Caco-2 (cell line): ENCODE measurements at regions of chr5 and their contacts with region 1.

Region 1: DNA sequence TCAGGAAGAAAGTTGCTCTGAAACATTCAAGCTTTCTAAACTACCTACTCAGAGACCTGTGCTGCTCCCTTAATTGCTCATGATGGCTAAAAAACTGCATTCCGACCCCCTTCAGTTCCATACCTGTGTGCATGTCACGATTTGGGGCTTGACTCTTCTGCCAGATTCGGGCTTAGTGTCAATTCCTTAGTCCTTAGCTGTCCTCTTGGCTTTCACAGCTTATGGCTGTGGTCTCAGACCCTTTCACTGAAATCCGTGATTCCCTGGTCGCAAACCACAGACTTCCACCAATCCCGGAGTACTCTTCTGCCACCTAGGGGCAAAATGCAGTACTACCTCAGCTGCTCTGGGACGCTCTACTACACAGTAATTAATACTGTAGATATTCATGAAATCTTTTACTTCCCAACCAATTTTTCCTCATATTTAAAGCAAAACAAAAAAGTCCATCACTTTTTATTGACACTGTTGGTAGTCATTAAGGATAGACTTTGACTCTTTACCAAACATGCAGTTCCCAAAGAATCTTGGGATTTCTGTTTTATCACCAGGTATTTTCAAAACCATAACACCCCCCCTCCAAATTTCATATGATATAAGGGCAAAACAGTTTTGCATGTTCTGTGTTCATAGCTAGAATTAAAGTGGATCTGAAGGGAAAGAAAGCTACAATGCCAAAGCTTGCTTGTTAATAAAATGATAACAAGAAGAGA is 617.4 kb downstream of the SLCO4C1 start:
- DNase-seq: peak; percentile 81 to 86
- H3K4me3 ChIP-seq: peak overlapping the region; percentile 31
- H3K4me3 Mint-ChIP-seq: peak overlapping the region; percentile 85
- H3K27ac Mint-ChIP-seq: peak overlapping the region; percentile 94
- H3K4me1 ChIP-seq: peaks cover 6% of the 10 kb centered on the region; the same call in 1 of the 2 replicates
- H3K4me1 Mint-ChIP-seq: peaks cover 11% of the 10 kb centered on the region
- H3K27me3 ChIP-seq: no peaks in the 10 kb centered on the region
- H3K27me3 Mint-ChIP-seq: no peaks in the 10 kb centered on the region
- CTCF ChIP-seq: peak; percentile 90 to 92

Region 2: GRCh38 chr5:100535060-100536005 is 1143.3 kb before region 1 on chr5 and contains the start of gene FAM174A:
- CTCF ChIA-PET with region 1: no interaction called
- POLR2A ChIA-PET with region 1: no interaction called
- intact Hi-C with region 1: loop called (anchors 5 kb)
- DNase-seq: peak; percentile 93 to 94
- H3K4me3 ChIP-seq: peak within 1 kb of the TSS; percentile 52
- H3K4me3 Mint-ChIP-seq: peak within 1 kb of the TSS; percentile 89
- H3K27ac Mint-ChIP-seq: peak within 1 kb of the TSS; percentile 87
- H3K4me1 ChIP-seq: 0 out of 2 replicates have a peak, but pooled peaks cover 4% of the 10 kb centered on the region
- H3K4me1 Mint-ChIP-seq: peaks cover 6% of the 10 kb centered on the region
- H3K27me3 ChIP-seq: no peaks in the 10 kb centered on the region
- H3K27me3 Mint-ChIP-seq: no peaks in the 10 kb centered on the region
- CTCF ChIP-seq: no peak
- total RNA-seq, gene FAM174A: 3.1 and 4.3 TPM in 2 replicates

Region 3: GRCh38 chr5:101260714-101261256 is 417.9 kb before region 1 on chr5:
- CTCF ChIA-PET with region 1: no interaction called
- POLR2A ChIA-PET with region 1: no interaction called
- intact Hi-C with region 1: loop called (anchors 5 kb)
- DNase-seq: peak; percentile 63 to 78
- H3K4me3 ChIP-seq: no peak overlapping the region
- H3K4me3 Mint-ChIP-seq: peak overlapping the region; percentile 68
- H3K27ac Mint-ChIP-seq: peak overlapping the region; percentile 83
- H3K4me1 ChIP-seq: peaks cover 25% of the 10 kb centered on the region
- H3K4me1 Mint-ChIP-seq: peaks cover 21% of the 10 kb centered on the region
- H3K27me3 ChIP-seq: no peaks in the 10 kb centered on the region
- H3K27me3 Mint-ChIP-seq: no peaks in the 10 kb centered on the region
- CTCF ChIP-seq: no peak

Region 4: DNA sequence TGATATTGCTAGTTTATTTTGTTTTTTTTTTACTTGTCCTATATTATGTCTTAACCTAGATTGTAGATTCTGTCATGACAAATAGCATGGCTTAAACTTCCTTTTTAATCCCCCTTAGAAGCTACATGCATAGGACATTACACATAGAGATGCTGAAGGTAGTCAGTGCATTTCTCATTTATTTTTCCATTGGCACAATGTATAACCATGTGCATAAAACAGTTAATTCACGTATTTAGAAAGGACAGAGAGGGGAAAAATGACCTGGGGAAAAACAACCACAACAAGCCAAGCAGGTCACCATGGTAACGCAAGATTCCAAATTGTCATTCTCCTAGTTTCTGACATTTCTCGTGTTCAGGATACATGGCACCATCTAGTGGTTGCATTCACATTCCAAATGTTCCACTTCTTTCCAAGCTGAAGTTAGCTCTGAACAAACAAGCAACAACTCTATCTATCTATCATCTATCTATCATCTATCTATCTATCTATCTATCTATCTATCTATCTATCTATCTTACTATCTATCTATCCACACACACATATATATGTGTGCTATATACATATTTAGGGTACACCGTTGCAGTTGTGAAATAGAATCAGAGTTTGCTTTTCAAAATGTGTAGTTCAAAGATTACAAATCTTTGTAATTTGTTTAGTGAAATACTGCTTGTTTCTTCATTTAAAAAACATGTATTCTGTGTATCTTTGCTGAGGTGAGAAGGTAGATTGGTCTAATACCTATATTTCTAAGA is 288.3 kb before region 1 on chr5:
- CTCF ChIA-PET with region 1: interaction called, 9 read pairs
- POLR2A ChIA-PET with region 1: no interaction called
- intact Hi-C with region 1: loop called (anchors 1 kb)
- DNase-seq: peak; percentile 39 to 69
- H3K4me3 ChIP-seq: no peak overlapping the region
- H3K4me3 Mint-ChIP-seq: no peak overlapping the region
- H3K27ac Mint-ChIP-seq: peak overlapping the region; percentile 24
- H3K4me1 ChIP-seq: no peaks in the 10 kb centered on the region
- H3K4me1 Mint-ChIP-seq: no peaks in the 10 kb centered on the region
- H3K27me3 ChIP-seq: no peaks in the 10 kb centered on the region
- H3K27me3 Mint-ChIP-seq: no peaks in the 10 kb centered on the region
- CTCF ChIP-seq: peak; percentile 49 to 75

Region 5: DNA sequence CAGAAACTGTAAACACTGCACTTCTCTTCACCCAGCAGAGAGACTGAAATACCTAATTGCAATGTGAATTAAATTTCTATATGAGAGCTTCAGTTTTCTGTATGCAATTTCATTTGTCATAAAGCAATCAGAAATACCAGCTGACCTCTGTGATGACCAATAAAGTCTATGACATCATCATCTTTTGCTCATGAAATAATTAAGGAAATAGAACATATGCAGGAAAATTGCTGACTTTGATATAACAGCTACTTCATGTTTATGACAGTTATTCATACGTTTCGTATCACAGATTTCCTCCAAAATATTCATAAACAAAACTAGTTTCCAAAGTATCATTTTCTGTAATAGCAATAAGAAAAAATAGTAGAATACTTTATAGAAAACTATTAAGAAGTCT is 34.8 kb before region 1 on chr5:
- CTCF ChIA-PET with region 1: no interaction called
- POLR2A ChIA-PET with region 1: no interaction called
- intact Hi-C with region 1: loop called (anchors 1 kb)
- DNase-seq: no peak
- H3K4me3 ChIP-seq: no peak overlapping the region
- H3K4me3 Mint-ChIP-seq: no peak overlapping the region
- H3K27ac Mint-ChIP-seq: no peak overlapping the region
- H3K4me1 ChIP-seq: no peaks in the 10 kb centered on the region
- H3K4me1 Mint-ChIP-seq: peaks cover 6% of the 10 kb centered on the region
- H3K27me3 ChIP-seq: no peaks in the 10 kb centered on the region
- H3K27me3 Mint-ChIP-seq: no peaks in the 10 kb centered on the region
- CTCF ChIP-seq: no peak

Region 6: GRCh38 chr5:102031711-102032110 is 353.1 kb after region 1 on chr5:
- CTCF ChIA-PET with region 1: no interaction called
- POLR2A ChIA-PET with region 1: no interaction called
- intact Hi-C with region 1: no loop called
- DNase-seq: no peak
- H3K4me3 ChIP-seq: no peak overlapping the region
- H3K4me3 Mint-ChIP-seq: no peak overlapping the region
- H3K27ac Mint-ChIP-seq: no peak overlapping the region
- H3K4me1 ChIP-seq: no peaks in the 10 kb centered on the region
- H3K4me1 Mint-ChIP-seq: no peaks in the 10 kb centered on the region
- H3K27me3 ChIP-seq: no peaks in the 10 kb centered on the region
- H3K27me3 Mint-ChIP-seq: no peaks in the 10 kb centered on the region
- CTCF ChIP-seq: no peak

Region 7: GRCh38 chr5:102223542-102224477 is 545.2 kb after region 1 on chr5:
- CTCF ChIA-PET with region 1: no interaction called
- POLR2A ChIA-PET with region 1: no interaction called
- intact Hi-C with region 1: loop called (anchors 5 kb)
- DNase-seq: peak in 1 of 2 experiments; percentile 67
- H3K4me3 ChIP-seq: no peak overlapping the region
- H3K4me3 Mint-ChIP-seq: no peak overlapping the region
- H3K27ac Mint-ChIP-seq: no peak overlapping the region
- H3K4me1 ChIP-seq: peaks cover 36% of the 10 kb centered on the region
- H3K4me1 Mint-ChIP-seq: peaks cover 8% of the 10 kb centered on the region
- H3K27me3 ChIP-seq: no peaks in the 10 kb centered on the region
- H3K27me3 Mint-ChIP-seq: no peaks in the 10 kb centered on the region
- CTCF ChIP-seq: peak; percentile 60 to 83

Region 8: GRCh38 chr5:102341681-102342288 is 663.1 kb after region 1 on chr5:
- CTCF ChIA-PET with region 1: no interaction called
- POLR2A ChIA-PET with region 1: no interaction called
- intact Hi-C with region 1: no loop called
- DNase-seq: no peak
- H3K4me3 ChIP-seq: no peak overlapping the region
- H3K4me3 Mint-ChIP-seq: no peak overlapping the region
- H3K27ac Mint-ChIP-seq: no peak overlapping the region
- H3K4me1 ChIP-seq: no peaks in the 10 kb centered on the region
- H3K4me1 Mint-ChIP-seq: no peaks in the 10 kb centered on the region
- H3K27me3 ChIP-seq: no peaks in the 10 kb centered on the region
- H3K27me3 Mint-ChIP-seq: no peaks in the 10 kb centered on the region
- CTCF ChIP-seq: no peak